Activated T-helper 1 cell treated with anti-CD3 and anti-CD28 coated beads, Interleukin-12 subunit alpha, Interleukin-12 subunit beta, Interleukin-2, Interleukin-4 antibody, amounts not matched to agents 30 ng/mL and 10 ng/mL and 1 ng/mL, durations not matched to agents 14 hours and 24 hours and 36 hours (primary cell): ENCODE measurements at regions of chr1 and their contacts with region 1.

Region 1: GRCh38 chr1:41802532-41803501 is 115.9 kb downstream of the HIVEP3 start:
- DNase-seq: peak; percentile 40
- H3K4me3 Mint-ChIP-seq: peak overlapping the region; percentile 37
- H3K27ac Mint-ChIP-seq: peak overlapping the region; percentile 92
- H3K4me1 Mint-ChIP-seq: peaks cover 89% of the 10 kb centered on the region
- H3K27me3 Mint-ChIP-seq: no peaks in the 10 kb centered on the region

Region 2: DNA sequence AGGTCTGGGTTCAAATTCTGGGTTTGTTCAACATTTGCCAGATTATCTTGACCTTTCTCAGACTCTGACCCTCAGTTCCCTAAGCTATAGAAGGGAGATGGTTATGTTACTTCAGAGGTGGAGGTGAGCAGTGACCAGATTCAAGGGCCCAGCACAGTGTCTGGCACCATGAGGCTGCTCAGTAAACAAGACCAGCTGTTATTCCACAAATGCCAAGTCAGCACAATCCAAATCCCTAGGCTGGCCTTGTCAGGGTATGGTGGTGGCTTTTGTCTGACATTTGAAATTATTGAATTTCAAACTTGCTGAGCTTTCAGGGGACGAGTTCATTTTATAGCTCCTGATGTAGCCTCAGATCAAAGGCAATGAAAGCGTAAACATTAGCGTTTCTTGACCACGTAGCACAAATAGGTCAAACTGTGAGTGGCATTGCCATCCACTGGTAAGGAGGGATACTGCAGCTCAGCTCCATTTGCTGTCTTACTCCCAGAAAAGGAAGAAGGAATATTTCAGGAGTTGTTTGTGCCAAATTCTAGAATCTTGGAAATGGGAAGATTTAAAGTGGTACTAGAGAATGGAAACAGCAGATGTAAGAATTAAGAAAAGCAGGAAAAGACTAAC is 224.0 kb before region 1 on chr1:
- intact Hi-C with region 1: no loop called
- DNase-seq: no peak
- H3K4me3 Mint-ChIP-seq: no peak overlapping the region
- H3K27ac Mint-ChIP-seq: peak overlapping the region; percentile 63
- H3K4me1 Mint-ChIP-seq: peaks cover 65% of the 10 kb centered on the region
- H3K27me3 Mint-ChIP-seq: no peaks in the 10 kb centered on the region

Region 3: GRCh38 chr1:41662061-41662764 is 140.6 kb before region 1 on chr1:
- intact Hi-C with region 1: loop called (anchors 2 kb)
- DNase-seq: peak; percentile 73
- H3K4me3 Mint-ChIP-seq: peak overlapping the region; percentile 70
- H3K27ac Mint-ChIP-seq: peak overlapping the region; percentile 65
- H3K4me1 Mint-ChIP-seq: peaks cover 83% of the 10 kb centered on the region
- H3K27me3 Mint-ChIP-seq: no peaks in the 10 kb centered on the region

Region 4: GRCh38 chr1:41739061-41739955 is 63.5 kb before region 1 on chr1:
- intact Hi-C with region 1: loop called (anchors 1 kb)
- DNase-seq: peak; percentile 74
- H3K4me3 Mint-ChIP-seq: peak overlapping the region; percentile 66
- H3K27ac Mint-ChIP-seq: peak overlapping the region; percentile 98
- H3K4me1 Mint-ChIP-seq: peaks cover 93% of the 10 kb centered on the region
- H3K27me3 Mint-ChIP-seq: peaks cover 2% of the 10 kb centered on the region

Region 5: DNA sequence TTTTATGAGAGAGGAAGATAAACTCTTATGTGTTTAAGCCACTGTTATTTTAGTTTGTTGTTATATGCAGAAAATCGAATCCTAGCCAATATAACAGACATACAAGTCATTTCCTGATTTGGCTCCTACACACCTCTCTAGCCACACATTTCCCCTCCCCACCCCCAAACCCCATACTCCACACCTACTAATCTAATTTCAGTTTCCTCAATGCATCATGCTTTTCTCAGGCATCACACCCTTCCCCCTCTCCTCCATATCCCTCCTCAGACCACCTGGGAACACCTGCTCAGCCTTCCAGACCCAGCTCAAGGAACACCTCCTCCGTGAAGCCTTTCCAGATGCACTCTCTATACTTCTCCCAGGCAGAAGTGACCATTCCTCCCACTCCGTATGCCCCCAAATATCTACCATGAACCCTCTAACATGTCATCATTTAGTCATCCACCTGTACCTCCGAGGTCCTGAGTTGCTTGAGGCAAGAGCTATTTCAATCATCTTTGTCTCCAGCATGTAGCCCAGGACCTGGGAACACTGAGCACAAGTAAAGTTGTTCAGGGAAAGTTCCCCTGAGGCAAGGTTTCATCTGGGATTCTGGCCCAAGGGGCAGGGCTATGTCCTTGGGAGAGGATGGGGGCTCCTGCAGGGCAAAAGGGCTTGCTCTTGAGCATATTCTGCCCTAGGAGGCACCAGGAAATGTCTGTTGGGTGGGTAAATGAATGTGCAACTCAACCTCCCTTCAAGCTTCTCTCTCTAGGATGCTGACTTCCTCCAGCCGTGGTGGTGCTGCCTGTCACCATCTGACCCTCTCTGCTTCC is 10.9 kb before region 1 on chr1:
- intact Hi-C with region 1: loop called (anchors 1 kb)
- DNase-seq: peak; percentile 11
- H3K4me3 Mint-ChIP-seq: peak overlapping the region; percentile 32
- H3K27ac Mint-ChIP-seq: peak overlapping the region; percentile 89
- H3K4me1 Mint-ChIP-seq: peaks cover 74% of the 10 kb centered on the region
- H3K27me3 Mint-ChIP-seq: no peaks in the 10 kb centered on the region

Region 6: GRCh38 chr1:42017259-42017658 is 214.4 kb after region 1 on chr1:
- intact Hi-C with region 1: loop called (anchors 5 kb)
- DNase-seq: no peak
- H3K4me3 Mint-ChIP-seq: no peak overlapping the region
- H3K27ac Mint-ChIP-seq: no peak overlapping the region
- H3K4me1 Mint-ChIP-seq: peaks cover 42% of the 10 kb centered on the region
- H3K27me3 Mint-ChIP-seq: no peaks in the 10 kb centered on the region

Region 7: GRCh38 chr1:42165511-42166163 is 362.8 kb after region 1 on chr1:
- intact Hi-C with region 1: no loop called
- DNase-seq: no peak
- H3K4me3 Mint-ChIP-seq: no peak overlapping the region
- H3K27ac Mint-ChIP-seq: no peak overlapping the region
- H3K4me1 Mint-ChIP-seq: no peaks in the 10 kb centered on the region
- H3K27me3 Mint-ChIP-seq: peaks cover 2% of the 10 kb centered on the region